Common myeloid progenitor, CD34-positive (primary cell): ENCODE measurements at regions of chr17 and their contacts with region 1.

Region 1: GRCh38 chr17:75295201-75296158 is 6.2 kb upstream of the SLC25A19 start:
- DNase-seq: peak in 2 of 3 donors; percentile 70 to 72
- H3K4me3 ChIP-seq: peak overlapping the region in 3 of 7 experiments; percentile 9 to 40 (median 25)
- H3K27ac ChIP-seq: peak overlapping the region; percentile 46 to 66
- H3K4me1 ChIP-seq: peaks cover 14 to 44% (median 25%) of the 10 kb centered on the region in 4 experiments
- H3K27me3 ChIP-seq: no peaks in the 10 kb centered on the region

Region 2: GRCh38 chr17:75271233-75271954 is 24.1 kb before region 1 on chr17:
- CTCF ChIA-PET with region 1: interaction called, 20 read pairs
- POLR2A ChIA-PET with region 1: no interaction called
- DNase-seq: peak; percentile 61 to 84 (median 72)
- H3K4me3 ChIP-seq: peak overlapping the region; percentile 79 to 96 (median 91)
- H3K27ac ChIP-seq: peak overlapping the region in 1 of 2 experiments; percentile 64
- H3K4me1 ChIP-seq: peaks cover 0 to 53% (median 27%) of the 10 kb centered on the region in 4 experiments
- H3K27me3 ChIP-seq: no peaks in the 10 kb centered on the region

Region 3: DNA sequence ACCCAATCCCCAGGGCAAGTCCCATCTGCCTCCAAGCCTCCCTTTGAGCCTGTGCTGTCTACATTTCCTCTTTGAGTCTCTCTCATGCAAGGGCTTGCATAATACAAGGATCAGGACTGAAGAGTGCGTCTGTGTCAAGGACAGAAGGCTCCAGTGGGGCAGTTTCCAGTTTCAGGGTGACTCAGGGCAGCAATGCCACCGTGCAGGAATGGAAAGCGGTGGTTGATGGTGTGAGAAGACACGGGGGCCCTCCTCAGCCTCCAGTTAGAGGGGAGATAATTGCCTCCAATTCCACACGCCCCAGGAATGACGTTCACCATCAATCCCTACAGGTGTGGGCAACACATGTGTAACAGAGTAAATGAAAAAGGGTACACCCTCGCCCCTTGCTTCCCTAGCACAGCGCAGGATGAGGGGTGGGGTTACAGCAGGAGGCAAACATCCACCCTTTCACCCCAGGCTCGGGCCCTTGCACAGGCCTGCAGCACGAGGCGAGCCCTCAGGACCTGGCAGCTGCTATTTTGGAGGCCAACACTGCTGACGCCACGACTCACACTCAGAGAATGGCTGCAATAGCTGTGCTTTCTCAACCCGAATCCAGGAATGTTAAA is 18.6 kb after region 1 on chr17:
- CTCF ChIA-PET with region 1: interaction called, 10 read pairs
- POLR2A ChIA-PET with region 1: no interaction called
- DNase-seq: no peak
- H3K4me3 ChIP-seq: no peak overlapping the region
- H3K27ac ChIP-seq: no peak overlapping the region
- H3K4me1 ChIP-seq: peaks cover 0 to 62% (median 27%) of the 10 kb centered on the region in 4 experiments
- H3K27me3 ChIP-seq: no peaks in the 10 kb centered on the region

Region 4: DNA sequence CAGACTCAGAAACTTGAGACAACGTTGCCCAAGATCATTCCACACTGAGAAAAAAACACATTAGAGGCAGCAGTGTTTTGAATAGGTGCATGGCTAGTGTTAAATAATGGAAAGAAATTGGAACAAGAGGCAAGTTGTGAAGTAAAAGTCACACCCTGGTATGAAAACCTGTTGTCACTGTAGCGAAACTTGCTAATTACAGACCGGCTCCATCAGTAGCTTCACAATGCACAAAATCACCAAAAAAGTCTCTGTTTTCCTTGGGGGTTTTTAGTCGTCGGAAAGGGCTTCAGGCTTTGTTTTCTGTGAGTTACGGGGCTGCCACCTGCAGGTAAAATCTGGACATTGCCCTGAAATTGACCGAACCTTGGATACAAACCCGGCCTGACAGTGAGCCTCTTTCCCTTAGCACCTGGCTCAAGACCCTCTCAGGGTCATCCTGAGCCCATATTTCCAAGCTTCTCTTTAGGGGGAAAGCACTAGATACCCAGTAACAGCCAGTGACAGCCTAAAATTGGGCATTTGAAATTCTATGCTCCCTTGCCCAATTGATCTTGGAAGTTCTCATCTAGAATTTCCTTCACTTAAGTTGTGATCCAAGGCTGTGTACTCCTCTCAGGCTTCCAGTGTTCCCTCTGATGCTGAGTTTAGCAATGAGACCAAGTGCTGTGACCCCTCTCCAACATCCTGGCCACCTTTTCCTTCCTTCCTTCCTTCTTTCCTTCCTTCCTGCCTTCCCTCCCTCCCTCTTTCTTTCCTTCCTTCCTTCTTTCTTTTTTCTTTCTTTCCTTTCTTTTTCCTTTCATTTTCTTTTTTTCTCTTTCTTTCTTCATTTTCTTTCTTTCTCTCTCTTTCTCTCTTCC is 117.2 kb after region 1 on chr17:
- CTCF ChIA-PET with region 1: interaction called, 17 read pairs
- POLR2A ChIA-PET with region 1: interaction called, 4 read pairs
- DNase-seq: peak; percentile 83 to 93 (median 88)
- H3K4me3 ChIP-seq: peak overlapping the region in 3 of 7 experiments; percentile 30 to 63 (median 32)
- H3K27ac ChIP-seq: no peak overlapping the region
- H3K4me1 ChIP-seq: peaks cover 3 to 38% (median 28%) of the 10 kb centered on the region in 4 experiments
- H3K27me3 ChIP-seq: no peaks in the 10 kb centered on the region